ENCODE measurements at regions of chr9 and their contacts with region 1.

Region 1: GRCh38 chr9:37485389-37486219 is at the start of gene POLR1E:
- DNase-seq: peak; percentile 96
- total RNA-seq, gene POLR1E: 18.8 TPM

Region 2: GRCh38 chr9:37350486-37351190 is 135.0 kb before region 1 on chr9:
- intact Hi-C with region 1: no loop called
- DNase-seq: no peak

Region 3: DNA sequence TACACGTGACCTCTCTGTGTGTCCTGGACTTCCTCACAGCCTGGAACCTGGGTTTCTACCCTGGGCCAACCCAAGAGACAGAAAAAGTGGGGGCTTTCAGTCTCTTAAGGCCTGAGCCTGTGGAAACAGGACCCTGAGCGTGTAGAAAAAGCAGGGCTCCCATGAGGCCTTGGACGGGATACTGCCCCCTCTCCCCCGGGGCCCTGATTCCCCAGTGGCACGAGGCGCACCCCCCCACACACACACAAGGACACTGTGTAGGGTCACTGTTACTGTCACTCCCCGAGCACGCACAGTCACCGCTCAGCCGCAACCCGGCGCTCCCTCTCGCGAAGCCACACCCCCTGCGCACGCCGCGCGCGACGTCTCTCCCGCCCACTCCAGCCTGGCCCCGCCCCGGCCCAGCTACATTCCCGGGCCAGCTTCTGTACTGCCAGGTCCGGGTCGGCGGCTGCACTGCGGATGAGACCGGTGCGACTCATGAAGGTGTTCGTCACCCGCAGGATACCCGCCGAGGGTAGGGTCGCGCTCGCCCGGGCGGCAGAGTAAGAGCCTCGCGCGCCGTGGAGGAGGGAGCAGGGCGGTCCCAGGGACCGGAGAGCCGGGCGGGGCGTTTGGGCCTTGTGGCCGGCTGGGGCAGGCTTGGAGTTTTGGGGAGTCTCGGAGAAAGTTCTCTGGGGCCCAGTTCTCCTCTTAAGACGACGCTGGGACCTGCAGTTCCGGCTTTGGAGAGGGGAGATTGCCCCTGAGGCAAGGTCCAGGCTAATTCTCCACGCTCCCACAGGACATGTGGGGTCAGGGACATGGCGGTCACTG is 63.1 kb before region 1 on chr9 and contains the start of gene GRHPR:
- intact Hi-C with region 1: no loop called
- DNase-seq: peak; percentile 98
- total RNA-seq, gene GRHPR: 102 TPM

Region 4: GRCh38 chr9:37437621-37438020 is 48.0 kb before region 1 on chr9:
- intact Hi-C with region 1: loop called (anchors 5 kb)
- DNase-seq: peak; percentile 36

Region 5: GRCh38 chr9:37465249-37466036 is 20.2 kb before region 1 on chr9 and contains the start of gene ZBTB5:
- intact Hi-C with region 1: loop called (anchors 2 kb)
- DNase-seq: peak; percentile 99
- total RNA-seq, gene ZBTB5: 7.2 TPM

Region 6: GRCh38 chr9:37575921-37576721 is 90.5 kb after region 1 on chr9 and contains the start of gene FBXO10:
- intact Hi-C with region 1: loop called (anchors 5 kb)
- DNase-seq: peak; percentile 87
- total RNA-seq, gene FBXO10: 5.9 TPM

Region 7: GRCh38 chr9:37592108-37592951 is 106.7 kb after region 1 on chr9 and contains the start of gene TOMM5:
- intact Hi-C with region 1: loop called (anchors 5 kb)
- DNase-seq: peak; percentile 98
- total RNA-seq, gene TOMM5: 52.9 TPM

Region 8: DNA sequence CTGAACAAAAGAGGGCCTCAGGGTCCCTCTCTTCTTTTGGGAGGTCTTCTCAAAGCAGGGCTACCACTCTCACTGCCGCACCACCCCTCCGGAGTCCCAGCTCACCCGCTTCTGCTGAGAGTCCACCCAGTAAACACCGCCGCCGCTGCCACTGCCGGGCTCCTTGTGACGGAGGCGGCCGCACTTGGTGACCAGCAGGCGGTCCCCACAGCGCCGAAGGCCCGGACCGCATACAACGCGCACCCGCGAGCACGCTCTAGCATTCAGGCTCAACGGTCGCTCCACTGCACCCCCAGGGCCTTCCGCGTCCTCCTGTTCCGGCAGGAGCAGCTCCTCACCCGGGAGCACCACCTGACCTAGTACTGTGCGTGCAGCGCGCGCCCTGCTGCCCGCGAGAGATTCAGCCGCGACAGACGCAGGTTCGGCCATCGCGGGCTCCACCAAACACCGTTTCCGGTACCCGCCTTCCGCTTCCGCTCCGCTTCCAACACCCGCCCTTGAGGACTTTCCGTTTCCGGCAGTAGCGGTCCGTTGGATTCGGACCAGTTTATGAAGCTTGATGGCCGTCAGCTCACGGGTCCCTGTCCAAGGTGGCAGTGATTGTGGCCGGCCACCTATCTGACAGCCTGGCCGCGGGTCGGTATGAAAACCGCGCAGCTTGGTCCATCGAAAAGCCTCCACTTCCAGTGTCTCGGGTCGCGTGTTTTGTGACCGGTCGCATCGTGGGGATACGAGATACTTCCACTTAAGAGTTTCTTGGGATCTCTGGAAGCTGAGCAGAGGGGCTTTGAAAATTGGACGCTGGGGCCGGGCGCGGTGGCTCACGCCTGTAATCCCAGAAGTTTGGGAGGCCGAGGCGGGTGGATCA is 299.2 kb after region 1 on chr9 and contains the start of gene EXOSC3:
- intact Hi-C with region 1: loop called (anchors 10 kb)
- DNase-seq: peak; percentile 97
- total RNA-seq, gene EXOSC3: 13.1 TPM

Region 9: DNA sequence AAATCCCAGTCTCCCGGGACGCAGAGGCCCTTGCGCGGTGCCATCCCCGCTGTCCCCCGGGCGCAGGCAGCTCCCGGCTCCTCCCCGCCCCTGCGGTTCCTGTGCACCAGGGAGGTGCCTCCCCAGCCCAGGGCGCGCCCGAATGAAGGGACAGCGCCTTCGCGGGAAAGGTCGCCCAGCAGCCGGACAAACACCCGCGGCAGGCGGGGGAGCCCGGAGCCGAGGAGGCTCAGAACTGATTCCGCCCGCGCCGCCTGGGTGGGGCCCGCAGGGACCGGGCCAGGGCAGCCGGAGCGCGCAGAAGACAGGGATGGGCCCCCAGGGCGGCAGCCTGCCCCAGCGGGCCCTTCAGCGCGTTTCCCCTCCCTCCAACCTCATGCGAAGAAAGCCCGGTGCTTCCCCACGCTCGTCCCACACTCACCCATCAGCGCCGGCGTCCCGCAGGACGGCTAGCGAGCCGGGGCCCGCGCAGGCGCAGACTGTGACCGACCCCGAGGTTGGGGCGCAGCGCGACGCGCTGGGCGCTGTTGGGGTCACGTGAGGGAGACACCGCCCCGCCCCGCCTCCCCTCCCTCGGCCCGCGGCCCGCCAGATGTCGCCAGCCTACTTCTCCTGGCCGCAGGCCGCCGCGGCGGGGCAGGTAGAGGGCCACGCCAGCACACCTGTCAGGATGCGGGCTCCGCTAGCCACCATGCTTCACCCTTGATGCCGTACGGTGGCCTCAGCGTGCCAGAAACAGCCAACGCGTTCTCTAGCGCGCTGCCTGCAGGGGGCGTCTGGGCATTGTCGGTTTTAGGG is 418.2 kb after region 1 on chr9 and contains the start of gene SLC25A51:
- intact Hi-C with region 1: loop called (anchors 10 kb)
- DNase-seq: peak; percentile 96
- total RNA-seq, gene SLC25A51: 29.0 TPM

Measured in cardiac septum (tissue), 1 donor.